PC-3 (cell line): ENCODE measurements at regions of chr17 and their contacts with region 1.

Region 1: DNA sequence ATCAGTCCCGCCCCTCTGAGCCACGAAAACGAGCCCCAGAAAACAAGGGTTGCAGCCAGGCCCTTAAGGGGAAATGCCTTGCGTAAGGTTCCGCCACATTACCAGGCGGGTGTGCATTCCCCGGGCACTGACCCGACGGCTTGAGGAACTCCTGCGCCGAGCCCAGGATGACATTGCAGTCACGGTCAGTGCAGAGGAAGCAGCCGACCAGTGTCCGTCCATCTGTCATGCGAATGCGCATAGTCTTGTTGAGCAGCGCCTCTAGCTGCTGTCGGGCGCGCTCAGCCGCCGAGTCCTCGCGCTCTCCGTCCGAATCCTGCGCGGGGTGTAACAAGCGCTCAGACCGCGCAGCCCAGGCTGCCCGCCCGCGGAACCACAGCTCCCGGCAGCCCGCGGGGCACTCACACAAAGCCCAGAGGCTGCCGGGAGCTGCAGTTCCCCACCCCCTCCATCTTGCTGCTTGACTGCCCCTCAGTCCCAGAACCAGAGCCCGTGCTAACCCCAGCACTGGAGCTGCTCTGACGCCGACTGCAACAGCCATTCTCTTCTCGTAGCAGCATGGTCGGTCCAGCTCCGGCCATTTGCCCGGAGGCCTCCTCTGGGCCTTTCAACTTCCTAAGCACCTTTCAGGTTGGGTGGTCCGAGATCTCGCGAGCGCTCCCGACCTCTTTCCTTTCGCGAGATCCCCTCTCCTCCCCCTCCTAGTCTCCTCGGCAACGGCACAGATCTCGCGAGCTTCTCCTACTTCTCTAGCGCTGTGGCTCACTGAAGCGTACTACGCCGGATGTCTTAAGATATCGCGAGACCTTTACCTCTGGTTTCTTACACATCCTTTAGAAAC is at the start of gene NAA38:
- DNase-seq: peak; percentile 97
- ATAC-seq: peak; percentile 78
- H3K4me3 ChIP-seq: peak within 1 kb of the TSS; percentile 90
- H3K27ac ChIP-seq: peak within 1 kb of the TSS; percentile 88
- H3K4me1 ChIP-seq: peaks cover 17% of the 10 kb centered on the region
- H3K27me3 ChIP-seq: no peaks in the 10 kb centered on the region
- CTCF ChIP-seq: peak; percentile 26; the same call in 1 of the 2 replicates
- total RNA-seq, gene NAA38: 403 and 409 TPM in 2 replicates

Region 2: GRCh38 chr17:7729816-7730215 is 127.3 kb before region 1 on chr17:
- CTCF ChIA-PET with region 1: no interaction called
- POLR2A ChIA-PET with region 1: interaction called, 11 read pairs
- intact Hi-C with region 1: no loop called
- DNase-seq: no peak
- ATAC-seq: no peak
- H3K4me3 ChIP-seq: no peak overlapping the region
- H3K27ac ChIP-seq: no peak overlapping the region
- H3K4me1 ChIP-seq: no peaks in the 10 kb centered on the region
- H3K27me3 ChIP-seq: no peaks in the 10 kb centered on the region
- CTCF ChIP-seq: no peak

Region 3: DNA sequence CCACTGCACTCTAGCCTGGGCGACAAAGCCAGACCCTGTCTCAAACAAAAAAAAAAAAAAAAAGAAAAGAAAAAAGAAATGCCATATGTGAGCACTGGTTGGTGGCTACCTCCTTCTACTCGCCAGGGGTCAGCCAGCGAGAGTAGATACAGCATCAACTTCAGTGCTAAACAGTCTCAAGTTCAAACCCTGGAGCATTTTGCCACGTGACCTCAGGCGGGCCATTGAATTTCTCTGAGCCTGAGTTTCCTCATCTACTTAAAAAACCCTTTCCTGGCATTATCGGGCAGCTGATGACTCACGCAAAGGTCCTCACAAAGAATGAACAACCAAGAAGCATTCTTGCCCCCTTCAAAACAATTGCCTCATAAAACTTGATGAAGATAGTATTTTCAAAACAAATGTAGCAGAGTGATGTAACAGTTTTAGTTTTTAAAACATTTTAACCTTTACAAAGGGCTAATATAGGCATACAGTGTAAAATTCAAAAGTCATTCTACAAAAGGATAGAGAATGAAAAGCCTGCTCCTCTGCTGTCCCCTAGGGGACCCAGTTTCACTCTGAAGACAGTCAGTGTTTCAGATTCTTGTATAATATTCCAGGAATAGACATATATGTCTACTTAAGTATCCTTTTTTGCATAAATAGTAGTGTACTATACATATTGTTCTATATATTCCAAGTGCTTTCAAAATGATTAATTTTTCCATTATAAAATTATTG is 111.2 kb before region 1 on chr17:
- CTCF ChIA-PET with region 1: interaction called, 30 read pairs
- POLR2A ChIA-PET with region 1: no interaction called
- intact Hi-C with region 1: no loop called
- DNase-seq: peak; percentile 82
- ATAC-seq: peak; percentile 42
- H3K4me3 ChIP-seq: no peak overlapping the region
- H3K27ac ChIP-seq: peak overlapping the region; percentile 12; the same call in 1 of the 2 replicates
- H3K4me1 ChIP-seq: peaks cover 34% of the 10 kb centered on the region
- H3K27me3 ChIP-seq: no peaks in the 10 kb centered on the region
- CTCF ChIP-seq: peak; percentile 35; the same call in 1 of the 2 replicates

Region 4: GRCh38 chr17:7834962-7835813 is 21.9 kb before region 1 on chr17:
- CTCF ChIA-PET with region 1: interaction called, 3 read pairs
- POLR2A ChIA-PET with region 1: no interaction called
- intact Hi-C with region 1: loop called (anchors 2 kb)
- DNase-seq: peak; percentile 97
- ATAC-seq: peak; percentile 56
- H3K4me3 ChIP-seq: peak overlapping the region; percentile 83
- H3K27ac ChIP-seq: peak overlapping the region; percentile 75
- H3K4me1 ChIP-seq: peaks cover 27% of the 10 kb centered on the region
- H3K27me3 ChIP-seq: no peaks in the 10 kb centered on the region
- CTCF ChIP-seq: peak; percentile 71

Region 5: GRCh38 chr17:7844292-7845154 is 12.6 kb before region 1 on chr17:
- CTCF ChIA-PET with region 1: no interaction called
- POLR2A ChIA-PET with region 1: no interaction called
- intact Hi-C with region 1: loop called (anchors 2 kb)
- DNase-seq: peak; percentile 88
- ATAC-seq: peak; percentile 67
- H3K4me3 ChIP-seq: peak overlapping the region; percentile 84
- H3K27ac ChIP-seq: peak overlapping the region; percentile 98
- H3K4me1 ChIP-seq: peaks cover 19% of the 10 kb centered on the region
- H3K27me3 ChIP-seq: no peaks in the 10 kb centered on the region
- CTCF ChIP-seq: no peak

Region 6: DNA sequence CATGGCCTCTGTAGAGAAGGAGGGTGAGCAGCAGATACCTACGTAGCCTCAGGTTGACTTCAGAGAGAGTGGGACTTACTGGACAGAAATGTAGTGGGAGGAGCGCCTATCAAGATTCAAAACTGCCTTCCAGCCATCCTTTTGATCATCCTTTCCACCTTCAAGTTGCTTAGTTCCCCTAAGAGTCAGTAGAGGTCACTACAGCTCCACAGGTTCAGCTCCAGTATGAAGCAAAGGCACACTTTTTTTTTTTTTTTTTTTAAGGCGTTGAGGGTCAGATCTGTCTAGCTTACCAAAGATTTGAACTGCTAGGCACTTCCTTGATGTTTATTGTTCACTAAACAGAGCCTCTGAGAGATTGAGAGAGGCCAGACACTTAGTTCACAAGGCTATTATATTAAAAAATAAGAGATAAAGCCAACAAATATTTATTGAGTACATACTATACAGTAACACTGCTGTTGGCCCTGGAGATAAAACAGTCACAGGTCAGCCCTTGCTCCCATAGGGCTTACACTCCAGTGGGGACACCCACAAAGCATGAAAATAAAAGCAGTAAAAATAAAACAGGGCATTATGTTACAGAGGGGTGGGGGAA is 55.9 kb after region 1 on chr17:
- CTCF ChIA-PET with region 1: no interaction called
- POLR2A ChIA-PET with region 1: no interaction called
- intact Hi-C with region 1: no loop called
- DNase-seq: peak; percentile 73
- ATAC-seq: peak; percentile 23
- H3K4me3 ChIP-seq: no peak overlapping the region
- H3K27ac ChIP-seq: no peak overlapping the region
- H3K4me1 ChIP-seq: peaks cover 17% of the 10 kb centered on the region
- H3K27me3 ChIP-seq: no peaks in the 10 kb centered on the region
- CTCF ChIP-seq: peak; percentile 72

Region 7: DNA sequence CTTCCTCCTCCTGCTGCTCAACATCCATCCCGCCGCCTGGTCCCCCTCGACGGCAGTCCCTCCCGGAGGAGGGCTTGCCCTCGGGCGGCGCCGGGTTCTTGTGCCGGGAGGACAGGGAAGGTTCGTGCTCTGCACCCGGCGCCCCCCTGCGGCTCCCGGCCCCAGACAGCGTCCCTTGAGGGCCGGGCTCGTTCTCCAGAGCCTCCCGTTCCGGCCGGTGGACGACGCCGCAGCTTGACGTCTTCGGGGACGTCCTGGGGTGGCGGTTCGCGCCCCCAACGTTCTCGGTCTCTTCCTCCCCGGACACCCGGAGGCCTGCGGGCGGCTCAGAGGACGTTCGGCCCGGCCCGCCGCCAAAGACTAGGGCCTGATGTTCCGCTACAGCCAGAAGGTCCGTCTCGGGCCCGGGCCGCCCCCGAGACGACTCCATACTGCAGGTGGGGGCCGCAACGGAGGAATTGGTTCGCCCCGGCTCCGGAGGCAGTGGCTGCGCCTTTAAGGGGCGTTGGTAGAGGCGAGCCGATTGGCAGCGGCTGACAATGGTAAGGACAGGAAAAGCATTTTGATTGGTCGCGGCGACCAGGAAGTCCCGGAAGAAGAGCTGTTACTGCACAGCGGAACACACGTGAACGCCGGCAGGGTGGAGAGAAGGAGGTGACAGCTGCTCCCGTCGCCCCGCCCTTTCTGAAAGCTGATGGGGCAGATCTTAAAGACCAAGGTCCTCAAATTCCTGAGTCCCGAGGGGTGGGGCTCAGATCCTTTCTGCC is 332.8 kb after region 1 on chr17 and contains the start of gene BORCS6:
- CTCF ChIA-PET with region 1: no interaction called
- POLR2A ChIA-PET with region 1: interaction called, 17 read pairs
- intact Hi-C with region 1: no loop called
- DNase-seq: peak; percentile 93
- ATAC-seq: peak; percentile 60
- H3K4me3 ChIP-seq: peak within 1 kb of the TSS; percentile 84
- H3K27ac ChIP-seq: peak within 1 kb of the TSS; percentile 58; the same call in 1 of the 2 replicates
- H3K4me1 ChIP-seq: peaks cover 19% of the 10 kb centered on the region
- H3K27me3 ChIP-seq: no peaks in the 10 kb centered on the region
- CTCF ChIP-seq: peak; percentile 17; the same call in 1 of the 2 replicates
- total RNA-seq, gene BORCS6: 5.9 and 7.3 TPM in 2 replicates